ENCODE measurements at regions of chr16 and their contacts with region 1.

Region 1: DNA sequence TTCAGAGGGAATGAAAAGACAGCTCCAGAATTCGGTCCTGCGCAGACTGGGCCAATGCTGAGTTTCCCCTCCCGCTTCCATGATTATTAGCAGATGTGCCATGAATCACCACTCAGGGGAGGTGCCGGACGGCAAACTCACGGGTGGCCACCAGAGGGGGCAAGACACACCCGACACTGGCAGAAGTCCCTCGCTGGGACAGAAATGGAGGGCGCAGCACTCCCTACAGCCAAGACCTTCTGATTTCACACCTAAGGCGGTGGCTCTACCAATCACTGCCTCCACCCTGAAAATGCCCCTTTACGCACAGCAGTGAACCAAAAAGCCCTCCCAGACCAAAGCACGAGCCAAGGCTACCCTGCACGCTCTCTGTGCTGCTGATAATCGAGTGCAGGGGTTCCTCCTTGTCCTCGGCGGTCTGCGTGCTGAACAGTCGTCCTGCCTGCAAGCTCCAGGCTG is 26.8 kb downstream of the TRAP1 start:
- DNase-seq: peak; percentile 89 to 91
- H3K4me3 ChIP-seq: peak overlapping the region in 1 of 3 donors; percentile 8
- H3K27ac ChIP-seq: peak overlapping the region in 2 of 3 donors; percentile 5 to 25
- H3K4me1 ChIP-seq: peaks cover 0 to 11% of the 10 kb centered on the region in 2 donors
- H3K27me3 ChIP-seq: no peaks in the 10 kb centered on the region
- CTCF ChIP-seq: peak; percentile 87 to 94 (median 88)
- POLR2A ChIP-seq: peak in 1 of 2 donors; percentile 13

Region 2: DNA sequence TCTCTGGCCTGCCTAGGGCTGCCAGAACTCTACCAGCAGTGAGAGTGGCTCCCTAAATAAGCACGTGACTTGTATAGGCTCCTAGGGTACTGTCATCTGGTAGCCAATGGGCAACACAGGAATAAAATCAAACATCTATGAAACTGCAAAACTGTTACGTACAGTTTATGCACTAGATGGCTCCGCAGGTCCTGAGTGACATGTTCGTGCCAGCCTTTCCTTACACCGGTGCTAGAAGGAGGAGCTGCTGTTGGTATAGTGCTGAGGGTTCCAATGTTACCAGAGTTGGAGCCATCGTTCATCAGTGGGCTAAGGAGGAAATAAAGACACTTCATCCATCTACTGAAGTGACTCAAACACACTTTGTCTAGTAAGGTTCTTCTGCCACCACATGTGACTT is 90.1 kb after region 1 on chr16:
- intact Hi-C with region 1: loop called (anchors 10 kb)
- DNase-seq: no peak
- H3K4me3 ChIP-seq: no peak overlapping the region
- H3K27ac ChIP-seq: no peak overlapping the region
- H3K4me1 ChIP-seq: peaks cover 0 to 8% of the 10 kb centered on the region in 2 donors
- H3K27me3 ChIP-seq: no peaks in the 10 kb centered on the region
- CTCF ChIP-seq: no peak
- POLR2A ChIP-seq: no peak

Region 3: GRCh38 chr16:3879887-3880564 is 189.5 kb after region 1 on chr16:
- intact Hi-C with region 1: loop called (anchors 10 kb)
- DNase-seq: peak; percentile 79
- H3K4me3 ChIP-seq: peak overlapping the region; percentile 21 to 88 (median 78)
- H3K27ac ChIP-seq: peak overlapping the region in 2 of 3 donors; percentile 76 to 80
- H3K4me1 ChIP-seq: peaks cover 24 to 32% of the 10 kb centered on the region in 2 donors
- H3K27me3 ChIP-seq: no peaks in the 10 kb centered on the region
- CTCF ChIP-seq: peak in 3 of 6 experiments; percentile 5 to 53 (median 32)
- POLR2A ChIP-seq: no peak